K562 (cell line): ENCODE measurements at regions of chr1 and their contacts with region 1.

Region 1: DNA sequence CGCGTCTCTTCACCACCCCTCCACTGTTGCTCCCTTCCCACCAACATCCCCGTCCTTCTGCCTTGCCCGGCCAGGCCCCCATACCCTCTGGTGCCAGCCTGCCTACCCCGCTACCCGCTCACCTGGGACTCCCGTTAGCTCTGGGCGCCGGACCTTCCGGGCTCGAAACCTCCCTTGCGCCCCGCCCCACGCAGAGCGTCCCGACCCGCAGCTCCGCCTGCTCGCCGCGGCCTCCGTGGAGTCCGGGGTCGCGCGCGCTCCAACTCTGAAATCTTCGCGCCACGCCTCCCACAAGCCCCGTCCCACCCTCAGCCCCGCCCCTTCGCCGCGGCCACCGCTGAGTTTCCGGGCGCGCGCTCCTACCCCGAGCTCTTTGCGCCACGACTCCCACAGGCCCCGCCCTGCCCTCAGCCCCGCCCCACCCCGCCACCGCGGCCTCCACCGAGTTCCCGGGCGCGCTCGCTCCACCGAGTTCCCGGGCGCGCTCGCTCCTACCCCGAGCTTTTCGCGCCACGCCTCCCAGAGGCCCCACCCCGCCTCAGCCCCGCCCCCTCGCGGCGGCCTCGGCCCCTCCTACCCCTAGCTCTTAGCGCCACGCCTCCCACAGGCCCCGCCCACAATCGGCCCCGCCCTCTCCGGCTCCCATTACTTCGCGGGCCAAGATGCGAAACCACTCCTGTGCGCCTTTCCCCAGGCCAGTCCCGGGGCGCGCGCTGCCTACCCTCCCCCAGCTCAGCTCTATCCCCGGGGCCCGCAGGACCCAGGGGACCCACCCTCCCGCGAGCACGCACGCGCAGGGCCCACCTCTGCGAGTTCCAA is at the start of gene IFT25:
- DNase-seq: peak; percentile 93 to 98 (median 96)
- ATAC-seq: peak; percentile 89
- H3K4me3 ChIP-seq: peak within 1 kb of the TSS; percentile 88
- H3K27ac ChIP-seq: peak within 1 kb of the TSS; percentile 91
- H3K4me1 ChIP-seq: peaks cover 27 to 29% of the 10 kb centered on the region in 2 experiments
- H3K27me3 ChIP-seq: no peaks in the 10 kb centered on the region
- CTCF ChIP-seq: peak in 1 of 3 experiments; percentile 1; a peak in 1 of 6 replicates
- EP300 ChIP-seq: no peak; the same call in 1 of the 2 replicates
- POLR2A ChIP-seq: peak; percentile 83
- RAD21 ChIP-seq: no peak
- polyA plus RNA-seq, gene IFT25: 168 to 178 TPM

Region 2: GRCh38 chr1:53485478-53486394 is 459.9 kb before region 1 on chr1:
- CTCF ChIA-PET with region 1: no interaction called
- POLR2A ChIA-PET with region 1: no interaction called
- in situ Hi-C with region 1: no loop called
- intact Hi-C with region 1: loop called (anchors 10 kb)
- DNase-seq: peak; percentile 85 to 87 (median 86)
- ATAC-seq: peak; percentile 98
- H3K4me3 ChIP-seq: no peak overlapping the region
- H3K27ac ChIP-seq: no peak overlapping the region
- H3K4me1 ChIP-seq: peaks cover 0 to 4% of the 10 kb centered on the region in 2 experiments; a peak in 1 of 5 replicates
- H3K27me3 ChIP-seq: peaks cover 40 to 86% of the 10 kb centered on the region in 2 experiments; a peak in 4 of 5 replicates
- CTCF ChIP-seq: peak; percentile 95 to 98 (median 96)
- EP300 ChIP-seq: no peak
- POLR2A ChIP-seq: no peak
- RAD21 ChIP-seq: peak; percentile 88 to 98

Region 3: DNA sequence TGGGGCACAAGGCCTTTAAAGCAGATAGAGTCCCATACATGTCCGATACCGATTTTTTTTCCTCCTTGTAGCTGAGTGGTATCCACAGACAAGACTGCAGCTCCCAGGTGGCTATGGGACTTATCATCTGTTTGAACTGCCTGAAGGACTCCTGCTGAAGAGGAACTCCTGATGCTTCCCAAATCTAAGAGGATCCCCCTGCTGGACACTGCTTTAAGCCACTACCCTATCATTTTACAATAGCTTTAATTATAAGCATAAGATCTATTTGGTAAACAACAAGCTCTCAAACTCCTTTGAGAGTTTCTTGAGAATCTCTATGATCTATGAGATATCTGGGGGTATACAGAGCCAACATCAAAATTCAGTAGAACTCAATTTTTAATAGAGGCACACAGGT is 119.3 kb before region 1 on chr1:
- CTCF ChIA-PET with region 1: no interaction called
- POLR2A ChIA-PET with region 1: no interaction called
- in situ Hi-C with region 1: no loop called
- intact Hi-C with region 1: no loop called
- DNase-seq: peak in 2 of 4 experiments; percentile 33 to 42
- ATAC-seq: peak; percentile 58; the same call in 1 of the 3 replicates
- H3K4me3 ChIP-seq: no peak overlapping the region
- H3K27ac ChIP-seq: no peak overlapping the region
- H3K4me1 ChIP-seq: no peaks in the 10 kb centered on the region
- H3K27me3 ChIP-seq: no peaks in the 10 kb centered on the region
- CTCF ChIP-seq: peak in 2 of 3 experiments; percentile 21 to 41; a peak in 2 of 6 replicates
- EP300 ChIP-seq: no peak
- POLR2A ChIP-seq: no peak
- RAD21 ChIP-seq: no peak

Region 4: DNA sequence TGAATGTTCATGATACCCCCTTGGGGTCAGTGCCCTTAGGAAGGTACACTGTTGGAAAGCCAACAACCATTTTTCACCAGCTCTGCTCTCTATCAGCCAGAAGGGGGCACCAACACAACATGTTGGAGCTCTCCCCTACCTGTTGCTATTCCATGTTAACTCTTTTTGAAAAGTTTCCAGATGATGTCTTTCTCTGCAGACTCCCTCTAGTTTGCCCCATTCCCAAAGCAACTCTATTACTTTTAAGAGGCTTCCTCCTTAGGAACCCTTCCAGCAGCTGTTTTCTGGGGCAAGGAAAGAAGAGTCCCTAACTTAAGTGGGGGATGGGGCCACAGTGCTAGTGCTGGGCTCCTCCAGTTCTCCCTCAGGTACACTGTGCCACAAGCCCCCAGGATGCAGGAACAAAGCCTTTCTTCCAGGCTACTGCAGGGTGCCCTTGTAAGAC is 84.7 kb before region 1 on chr1:
- CTCF ChIA-PET with region 1: interaction called, 16 read pairs
- POLR2A ChIA-PET with region 1: interaction called, 4 read pairs
- in situ Hi-C with region 1: no loop called
- intact Hi-C with region 1: loop called (anchors 1 kb)
- DNase-seq: peak; percentile 70 to 82 (median 80)
- ATAC-seq: peak; percentile 97
- H3K4me3 ChIP-seq: no peak overlapping the region
- H3K27ac ChIP-seq: no peak overlapping the region
- H3K4me1 ChIP-seq: no peaks in the 10 kb centered on the region
- H3K27me3 ChIP-seq: no peaks in the 10 kb centered on the region
- CTCF ChIP-seq: peak; percentile 87 to 95 (median 91)
- EP300 ChIP-seq: no peak
- POLR2A ChIP-seq: no peak
- RAD21 ChIP-seq: peak; percentile 81 to 92

Region 5: DNA sequence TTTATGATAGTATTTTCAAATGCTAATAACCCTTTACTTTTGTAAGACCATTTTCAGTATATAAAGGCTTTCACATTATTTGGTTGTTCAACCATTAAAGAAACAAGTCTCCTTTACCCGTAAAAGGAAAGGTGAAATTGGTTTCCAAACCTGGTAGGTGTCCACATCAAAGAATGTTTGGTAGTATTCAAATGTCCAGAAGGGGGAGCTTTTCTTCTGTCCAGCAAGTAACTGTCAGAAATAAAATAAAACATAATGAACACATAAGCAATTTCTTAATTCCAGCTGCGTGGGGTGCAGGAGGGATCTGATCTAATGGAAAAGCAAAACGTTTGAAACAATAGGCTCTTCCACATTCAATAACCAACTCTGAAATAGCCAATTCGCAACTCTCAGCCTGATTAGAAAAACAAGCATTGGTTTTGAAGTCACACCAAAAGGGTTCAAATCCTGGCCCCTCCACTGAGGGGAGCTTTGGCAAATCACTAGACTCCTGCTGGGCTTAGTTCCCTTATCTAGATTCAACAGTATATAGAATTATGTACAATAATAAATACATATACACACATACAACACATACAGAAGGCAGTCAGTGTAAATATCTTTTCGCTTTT is 67.0 kb before region 1 on chr1:
- CTCF ChIA-PET with region 1: interaction called, 18 read pairs
- POLR2A ChIA-PET with region 1: interaction called, 4 read pairs
- in situ Hi-C with region 1: no loop called
- intact Hi-C with region 1: loop called (anchors 1 kb)
- DNase-seq: peak; percentile 34 to 66 (median 45)
- ATAC-seq: peak; percentile 86
- H3K4me3 ChIP-seq: no peak overlapping the region
- H3K27ac ChIP-seq: no peak overlapping the region
- H3K4me1 ChIP-seq: no peaks in the 10 kb centered on the region
- H3K27me3 ChIP-seq: no peaks in the 10 kb centered on the region
- CTCF ChIP-seq: peak; percentile 64 to 86 (median 68); a peak in 5 of 6 replicates
- EP300 ChIP-seq: no peak
- POLR2A ChIP-seq: no peak
- RAD21 ChIP-seq: peak; percentile 66 to 83

Region 6: GRCh38 chr1:53909946-53910345 is 35.7 kb before region 1 on chr1:
- CTCF ChIA-PET with region 1: interaction called, 18 read pairs
- POLR2A ChIA-PET with region 1: interaction called, 3 read pairs
- in situ Hi-C with region 1: no loop called
- intact Hi-C with region 1: no loop called
- DNase-seq: no peak
- ATAC-seq: no peak
- H3K4me3 ChIP-seq: no peak overlapping the region
- H3K27ac ChIP-seq: no peak overlapping the region
- H3K4me1 ChIP-seq: no peaks in the 10 kb centered on the region; a peak in 1 of 5 replicates
- H3K27me3 ChIP-seq: no peaks in the 10 kb centered on the region
- CTCF ChIP-seq: no peak
- EP300 ChIP-seq: no peak
- POLR2A ChIP-seq: no peak
- RAD21 ChIP-seq: no peak

Region 7: DNA sequence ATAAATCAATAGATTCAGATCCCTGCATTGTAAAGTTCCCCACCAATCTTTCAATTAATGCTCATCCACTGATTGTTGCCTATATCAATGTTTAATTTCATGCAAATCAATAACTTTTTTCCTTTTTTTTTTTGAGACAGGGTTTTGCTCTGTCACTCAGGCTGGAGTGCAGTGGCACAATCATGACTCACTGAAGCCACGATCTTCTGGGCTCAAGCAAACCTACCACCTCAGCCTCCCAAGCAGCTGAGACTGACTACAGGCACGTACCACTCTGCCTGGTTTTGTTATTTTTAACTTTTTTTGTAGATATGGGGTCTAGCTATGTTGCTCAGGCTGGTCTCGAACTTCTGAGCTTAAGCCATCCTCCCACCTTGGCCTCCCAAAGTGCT is 26.0 kb before region 1 on chr1:
- CTCF ChIA-PET with region 1: interaction called, 18 read pairs
- POLR2A ChIA-PET with region 1: interaction called, 17 read pairs
- in situ Hi-C with region 1: no loop called
- intact Hi-C with region 1: no loop called
- DNase-seq: no peak
- ATAC-seq: peak; percentile 60
- H3K4me3 ChIP-seq: no peak overlapping the region
- H3K27ac ChIP-seq: no peak overlapping the region
- H3K4me1 ChIP-seq: no peaks in the 10 kb centered on the region
- H3K27me3 ChIP-seq: no peaks in the 10 kb centered on the region
- CTCF ChIP-seq: no peak
- EP300 ChIP-seq: no peak
- POLR2A ChIP-seq: no peak
- RAD21 ChIP-seq: no peak

Region 8: GRCh38 chr1:54052934-54053744 is 107.5 kb after region 1 on chr1 and contains the starts of genes TCEANC2 and TMEM59:
- CTCF ChIA-PET with region 1: no interaction called
- POLR2A ChIA-PET with region 1: no interaction called
- in situ Hi-C with region 1: no loop called
- intact Hi-C with region 1: loop called (anchors 5 kb)
- DNase-seq: peak; percentile 93 to 99 (median 94)
- ATAC-seq: peak; percentile 94
- H3K4me3 ChIP-seq: peak within 1 kb of the TSS; percentile 78
- H3K27ac ChIP-seq: peak within 1 kb of the TSS; percentile 87
- H3K4me1 ChIP-seq: peaks cover 8% of the 10 kb centered on the region in 2 experiments; a peak in 4 of 5 replicates
- H3K27me3 ChIP-seq: no peaks in the 10 kb centered on the region
- CTCF ChIP-seq: no peak
- EP300 ChIP-seq: peak; percentile 21; the same call in 1 of the 2 replicates
- POLR2A ChIP-seq: peak; percentile 82
- RAD21 ChIP-seq: no peak
- polyA plus RNA-seq, gene TCEANC2: 9.8 to 10.2 TPM
- polyA plus RNA-seq, gene TMEM59: 196 to 202 TPM

Region 9: DNA sequence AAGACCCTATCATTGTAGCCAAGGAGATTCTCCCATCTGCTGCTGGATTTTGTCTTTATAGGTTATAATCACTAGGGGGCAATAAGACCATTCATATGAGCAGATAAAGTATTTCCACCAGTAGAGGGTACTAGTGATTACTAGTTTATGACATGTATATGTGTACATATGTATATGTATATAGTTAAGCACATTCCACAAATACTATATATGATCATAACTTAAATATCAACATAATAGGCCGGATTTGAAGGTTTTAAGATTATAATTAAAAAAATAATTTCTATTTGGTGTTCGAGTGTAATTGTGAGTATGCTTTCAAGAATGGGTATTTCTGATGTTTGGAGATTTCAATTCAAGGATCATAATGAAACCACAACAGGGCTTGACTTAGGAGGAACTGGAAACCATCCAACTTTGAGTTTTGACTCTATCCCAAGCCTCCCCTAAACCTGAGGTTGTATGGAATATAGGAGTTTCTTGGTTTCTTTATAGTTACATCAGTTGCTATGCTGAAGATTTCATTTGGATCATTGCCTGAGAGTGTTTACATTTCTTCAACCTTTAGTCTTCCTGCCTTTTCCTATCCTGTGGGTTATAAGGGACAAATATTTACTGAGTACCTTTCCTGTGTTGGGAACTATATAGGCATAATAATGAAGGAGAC is 124.7 kb after region 1 on chr1:
- CTCF ChIA-PET with region 1: no interaction called
- POLR2A ChIA-PET with region 1: no interaction called
- in situ Hi-C with region 1: no loop called
- intact Hi-C with region 1: no loop called
- DNase-seq: peak; percentile 57 to 70 (median 64)
- ATAC-seq: peak; percentile 95
- H3K4me3 ChIP-seq: no peak overlapping the region
- H3K27ac ChIP-seq: no peak overlapping the region
- H3K4me1 ChIP-seq: peaks cover 5 to 8% of the 10 kb centered on the region in 2 experiments; a peak in 1 of 5 replicates
- H3K27me3 ChIP-seq: no peaks in the 10 kb centered on the region
- CTCF ChIP-seq: peak; percentile 79 to 100 (median 99)
- EP300 ChIP-seq: no peak
- POLR2A ChIP-seq: no peak
- RAD21 ChIP-seq: peak; percentile 95 to 97

Region 10: GRCh38 chr1:54227091-54227602 is 281.5 kb after region 1 on chr1:
- CTCF ChIA-PET with region 1: no interaction called
- POLR2A ChIA-PET with region 1: no interaction called
- in situ Hi-C with region 1: no loop called
- intact Hi-C with region 1: no loop called
- DNase-seq: no peak
- ATAC-seq: no peak
- H3K4me3 ChIP-seq: no peak overlapping the region
- H3K27ac ChIP-seq: no peak overlapping the region
- H3K4me1 ChIP-seq: peaks cover 27 to 41% of the 10 kb centered on the region in 2 experiments
- H3K27me3 ChIP-seq: no peaks in the 10 kb centered on the region
- CTCF ChIP-seq: no peak
- EP300 ChIP-seq: no peak
- POLR2A ChIP-seq: no peak
- RAD21 ChIP-seq: no peak